Breast epithelium (tissue), 4 donors: ENCODE measurements at regions of chr14 and their contacts with region 1.

Region 1: DNA sequence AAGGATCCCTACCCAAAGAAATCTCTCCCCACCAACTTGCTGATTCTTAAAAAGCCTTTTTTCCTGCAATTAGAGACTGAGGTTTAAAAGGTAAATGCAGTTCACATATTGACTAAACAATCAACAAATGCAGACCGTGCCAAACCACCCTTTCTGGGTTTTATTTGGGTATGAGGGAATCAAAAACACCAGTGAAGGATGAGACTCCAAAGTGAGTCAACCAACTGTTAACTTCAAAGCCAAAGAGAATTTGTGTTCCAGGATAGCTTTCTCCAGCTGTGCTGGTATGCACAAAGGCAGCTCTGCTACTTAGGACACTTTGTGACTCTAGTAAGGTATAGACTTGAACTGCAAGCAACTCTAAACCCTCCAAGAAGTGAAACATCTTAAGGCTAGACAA is 39.4 kb downstream of the RPS29 start:
- DNase-seq: no peak
- H3K4me3 ChIP-seq: no peak overlapping the region
- H3K27ac ChIP-seq: no peak overlapping the region
- H3K4me1 ChIP-seq: no peaks in the 10 kb centered on the region
- H3K27me3 ChIP-seq: no peaks in the 10 kb centered on the region
- CTCF ChIP-seq: no peak
- POLR2A ChIP-seq: no peak

Region 2: GRCh38 chr14:49560374-49560768 is 13.6 kb after region 1 on chr14:
- intact Hi-C with region 1: loop called (anchors 1 kb)
- DNase-seq: no peak
- H3K4me3 ChIP-seq: no peak overlapping the region
- H3K27ac ChIP-seq: no peak overlapping the region
- H3K4me1 ChIP-seq: no peaks in the 10 kb centered on the region
- H3K27me3 ChIP-seq: no peaks in the 10 kb centered on the region
- CTCF ChIP-seq: no peak
- POLR2A ChIP-seq: no peak

Region 3: DNA sequence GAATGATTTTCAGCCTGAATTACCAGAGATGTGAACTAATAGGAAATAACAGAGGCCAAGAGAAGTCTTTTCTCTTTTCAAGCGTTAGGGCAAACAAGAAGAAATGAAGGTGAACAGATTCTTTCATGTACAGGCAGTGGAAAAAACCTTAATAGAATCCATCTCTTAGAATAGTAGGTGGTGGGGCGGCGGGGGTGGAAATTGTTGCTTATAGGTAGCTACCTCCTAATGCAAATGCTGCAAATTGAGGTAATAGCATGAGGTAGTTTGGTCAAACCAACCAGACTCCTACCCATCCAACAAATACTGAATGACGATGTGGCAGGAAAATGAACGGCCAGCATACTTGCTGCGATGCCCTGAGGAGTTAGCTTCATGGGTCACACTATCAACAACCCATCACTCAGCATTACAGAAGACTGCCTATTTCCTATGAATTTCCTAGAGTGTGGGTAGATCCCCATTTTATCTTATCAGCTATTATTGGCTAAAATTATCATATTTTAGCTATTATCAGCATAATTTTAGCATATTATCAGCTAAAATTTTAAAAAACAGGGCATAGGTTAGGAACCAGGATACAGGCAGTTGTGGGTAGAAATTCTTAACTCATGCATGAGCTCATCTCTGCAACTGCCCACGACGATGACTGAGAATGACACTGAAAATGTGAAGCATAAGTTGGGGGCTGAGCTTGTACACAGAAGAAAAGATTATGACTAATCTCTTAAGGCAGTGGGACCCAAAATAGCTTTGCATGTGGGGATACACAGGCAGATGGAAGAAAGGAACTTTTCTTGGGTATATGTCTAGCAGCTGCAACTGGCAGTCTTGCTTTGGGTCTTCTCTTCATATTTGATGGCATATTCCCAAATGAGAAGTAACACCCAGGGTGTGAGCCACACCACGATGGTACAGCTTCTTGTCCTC is 1215.5 kb after region 1 on chr14:
- intact Hi-C with region 1: no loop called
- DNase-seq: no peak
- H3K4me3 ChIP-seq: no peak overlapping the region
- H3K27ac ChIP-seq: peak overlapping the region; percentile 33 to 72
- H3K4me1 ChIP-seq: peaks cover 0 to 7% of the 10 kb centered on the region in 2 donors
- H3K27me3 ChIP-seq: no peaks in the 10 kb centered on the region
- CTCF ChIP-seq: no peak
- POLR2A ChIP-seq: no peak